Heart right ventricle (tissue), 16 donors: ENCODE measurements at regions of chrX and their contacts with region 1.

Region 1: GRCh38 chrX:56429581-56429980 is 133.8 kb upstream of the UBQLN2 start:
- DNase-seq: no peak
- ATAC-seq: no peak
- H3K4me3 ChIP-seq: no peak overlapping the region
- H3K27ac ChIP-seq: no peak overlapping the region
- H3K4me1 ChIP-seq: no peaks in the 10 kb centered on the region
- H3K27me3 ChIP-seq: peaks cover 0 to 6% (median 0%) of the 10 kb centered on the region in 7 donors
- CTCF ChIP-seq: no peak

Region 2: DNA sequence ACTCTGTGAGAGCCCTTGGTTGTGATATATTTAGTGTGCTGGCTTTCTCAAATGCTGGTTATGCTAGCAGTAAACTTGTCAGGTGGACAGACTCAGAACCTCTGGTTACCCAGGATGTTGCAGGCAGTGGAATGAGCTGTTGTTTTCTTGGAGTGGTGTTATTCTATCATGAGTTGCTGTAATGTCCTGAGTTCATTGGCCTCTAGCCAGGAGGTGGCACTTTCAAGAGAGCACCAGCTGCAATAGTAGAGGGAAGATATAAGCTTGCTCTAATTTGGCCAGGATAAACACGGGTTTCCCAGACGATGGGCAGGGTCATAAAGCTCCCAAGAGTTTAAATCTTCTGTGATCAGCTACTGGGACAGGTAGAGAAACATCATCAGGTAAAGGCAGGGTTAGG is 38.9 kb after region 1 on chrX:
- intact Hi-C with region 1: loop called in 1 of 10 experiments (anchors 10 kb)
- DNase-seq: no peak
- ATAC-seq: no peak
- H3K4me3 ChIP-seq: no peak overlapping the region
- H3K27ac ChIP-seq: no peak overlapping the region
- H3K4me1 ChIP-seq: no peaks in the 10 kb centered on the region
- H3K27me3 ChIP-seq: peaks cover 0 to 10% (median 0%) of the 10 kb centered on the region in 7 donors
- CTCF ChIP-seq: no peak